ENCODE measurements at regions of chr1 and their contacts with region 1.

Region 1: GRCh38 chr1:204506961-204507387 is 9.2 kb upstream of the MDM4 start:
- DNase-seq: peak; percentile 88
- H3K4me3 ChIP-seq: peak overlapping the region; percentile 52
- H3K27ac ChIP-seq: peak overlapping the region; percentile 85
- H3K27me3 ChIP-seq: no peaks in the 10 kb centered on the region
- CTCF ChIP-seq: no peak

Region 2: DNA sequence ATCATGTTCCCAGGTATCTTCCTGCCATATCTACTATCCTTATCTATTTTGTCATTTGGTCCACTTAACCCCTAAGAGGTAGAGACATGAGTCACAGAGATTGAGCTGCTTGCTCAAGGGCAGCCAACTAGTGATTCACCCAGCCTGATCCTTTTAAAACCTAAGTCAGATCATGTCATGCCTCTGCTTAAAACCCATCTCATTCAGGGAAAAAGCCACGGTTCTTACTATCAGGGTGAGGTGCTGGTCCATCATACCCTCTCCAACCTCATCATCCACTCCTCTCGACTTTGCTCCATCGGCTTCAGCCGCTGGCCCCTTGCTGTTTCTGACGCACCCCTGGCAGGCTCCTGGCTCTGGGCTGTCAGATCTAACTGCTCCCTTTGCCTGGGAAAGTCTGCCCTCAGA is 80.9 kb before region 1 on chr1:
- CTCF ChIA-PET with region 1: interaction called, 175 read pairs
- POLR2A ChIA-PET with region 1: no interaction called
- DNase-seq: no peak
- H3K4me3 ChIP-seq: no peak overlapping the region
- H3K27ac ChIP-seq: no peak overlapping the region
- H3K27me3 ChIP-seq: no peaks in the 10 kb centered on the region
- CTCF ChIP-seq: no peak

Region 3: DNA sequence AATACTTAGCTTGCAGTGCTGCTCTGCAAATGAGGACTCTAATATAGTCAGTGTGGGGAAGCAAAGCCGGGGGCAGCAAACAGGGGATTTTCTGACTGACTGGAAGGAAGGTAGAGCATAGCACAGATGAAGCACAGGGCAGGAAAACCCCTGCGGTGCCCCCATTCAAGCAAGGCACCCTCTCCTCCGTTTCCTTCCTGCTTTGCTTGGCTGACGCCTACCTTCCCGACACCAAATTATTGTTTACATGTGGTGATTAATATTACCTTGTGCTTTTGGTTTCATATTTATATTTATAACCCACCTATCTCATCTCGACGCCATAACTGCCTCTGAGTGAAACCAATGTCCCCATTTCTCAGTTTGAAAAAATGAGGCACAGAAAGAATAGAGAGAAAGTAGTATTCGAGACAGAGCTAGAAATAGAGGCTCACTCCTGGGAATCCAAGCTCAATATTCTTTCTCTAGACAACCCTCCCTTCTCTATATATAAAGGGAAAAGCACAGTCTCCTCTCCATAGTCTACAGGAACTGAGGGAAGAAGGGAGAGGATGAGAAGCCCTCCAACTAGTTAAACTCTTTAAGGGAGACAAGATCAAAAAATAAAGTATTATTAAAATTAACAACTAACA is 53.7 kb before region 1 on chr1:
- CTCF ChIA-PET with region 1: interaction called, 483 read pairs
- POLR2A ChIA-PET with region 1: no interaction called
- DNase-seq: no peak
- H3K4me3 ChIP-seq: no peak overlapping the region
- H3K27ac ChIP-seq: no peak overlapping the region
- H3K27me3 ChIP-seq: no peaks in the 10 kb centered on the region
- CTCF ChIP-seq: no peak

Region 4: GRCh38 chr1:204494281-204495077 is 12.5 kb before region 1 on chr1 and contains the start of gene PIK3C2B:
- CTCF ChIA-PET with region 1: interaction called, 55 read pairs
- POLR2A ChIA-PET with region 1: interaction called, 4 read pairs
- DNase-seq: peak; percentile 33
- H3K4me3 ChIP-seq: peak within 1 kb of the TSS; percentile 87
- H3K27ac ChIP-seq: peak within 1 kb of the TSS; percentile 70
- H3K27me3 ChIP-seq: peaks cover 8% of the 10 kb centered on the region
- CTCF ChIP-seq: peak; percentile 34; the same call in 1 of the 2 replicates
- polyA plus RNA-seq, gene PIK3C2B: 4.9 and 6.3 TPM in 2 replicates

Region 5: DNA sequence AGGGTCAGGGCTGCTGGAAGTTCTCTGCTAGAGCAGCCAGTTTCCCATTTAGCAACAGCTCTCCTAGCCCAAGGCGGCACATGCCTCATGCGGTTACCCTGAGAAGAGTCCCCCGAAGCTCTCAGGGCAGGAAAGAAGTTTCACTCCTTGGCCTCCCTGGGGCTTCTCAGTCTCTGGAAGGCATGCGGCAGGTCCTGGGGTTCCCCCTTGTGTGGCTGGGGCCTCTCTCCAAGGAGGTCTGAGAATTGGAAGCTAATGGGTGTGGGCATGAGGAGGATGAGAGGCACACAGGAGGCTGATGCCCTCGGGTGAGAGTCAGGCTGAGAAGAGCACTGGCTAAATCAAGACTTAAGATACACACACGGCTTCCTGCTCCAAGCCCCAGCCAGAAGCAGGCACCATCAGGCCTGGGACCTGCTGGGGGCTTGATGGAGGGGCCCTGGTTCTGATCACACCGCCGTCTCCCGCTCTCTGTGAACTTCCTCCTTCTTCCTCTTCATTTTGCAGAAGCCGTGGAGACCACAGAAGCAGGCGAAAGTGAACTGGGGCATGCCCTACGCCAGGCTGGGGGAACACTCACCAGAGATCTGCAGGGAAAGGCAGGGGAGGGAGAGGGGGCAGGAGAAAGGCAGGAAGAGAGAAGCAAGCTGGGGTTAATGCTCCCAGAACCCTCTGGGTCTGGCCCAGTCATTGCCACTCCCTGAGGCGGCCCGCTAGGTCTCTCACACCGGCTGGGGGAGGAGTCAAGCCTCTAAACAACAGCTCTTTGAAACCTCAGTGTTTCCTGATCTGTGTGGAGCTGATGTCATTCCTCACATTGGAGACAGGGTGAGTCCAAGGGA is 933.7 kb after region 1 on chr1:
- CTCF ChIA-PET with region 1: no interaction called
- POLR2A ChIA-PET with region 1: no interaction called
- DNase-seq: no peak
- H3K4me3 ChIP-seq: no peak overlapping the region
- H3K27ac ChIP-seq: no peak overlapping the region
- H3K27me3 ChIP-seq: peaks cover 33% of the 10 kb centered on the region
- CTCF ChIP-seq: no peak

Measured in AG04450 (cell line).